Activated CD8-positive, alpha-beta T cell treated with anti-CD3 and anti-CD28 coated beads for 36 hours (primary cell): ENCODE measurements at regions of chr2 and their contacts with region 1.

Region 1: GRCh38 chr2:61764035-61764800 is 89.6 kb downstream of the FAM161A start:
- DNase-seq: peak; percentile 98
- ATAC-seq: peak; percentile 98
- H3K4me3 Mint-ChIP-seq: peak overlapping the region; percentile 95
- H3K27ac Mint-ChIP-seq: peak overlapping the region; percentile 95
- H3K4me1 Mint-ChIP-seq: peaks cover 15% of the 10 kb centered on the region
- H3K27me3 Mint-ChIP-seq: no peaks in the 10 kb centered on the region
- CTCF ChIP-seq: no peak

Region 2: DNA sequence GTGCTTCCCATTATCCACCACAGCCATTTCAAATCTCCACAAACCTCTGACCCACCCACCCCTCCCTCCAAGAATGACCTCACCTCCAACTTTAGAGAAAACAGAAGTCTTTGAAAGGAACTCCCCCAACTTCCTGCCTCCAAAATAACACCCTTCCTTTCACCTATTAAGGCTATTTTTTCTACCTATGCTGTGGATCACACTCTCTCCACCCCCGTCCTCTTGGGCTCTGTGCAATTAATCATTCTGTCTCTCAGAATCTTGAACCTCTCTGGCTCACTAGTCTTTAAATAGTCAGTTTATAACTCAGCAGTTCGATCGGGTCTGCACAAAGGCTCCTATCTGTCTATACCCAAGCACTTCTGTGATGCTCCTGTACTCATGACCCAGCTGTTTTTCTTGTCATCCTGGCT is 188.8 kb before region 1 on chr2:
- CTCF ChIA-PET with region 1: no interaction called
- POLR2A ChIA-PET with region 1: no interaction called
- intact Hi-C with region 1: no loop called
- DNase-seq: peak; percentile 43
- ATAC-seq: peak; percentile 90
- H3K4me3 Mint-ChIP-seq: no peak overlapping the region
- H3K27ac Mint-ChIP-seq: peak overlapping the region; percentile 71
- H3K4me1 Mint-ChIP-seq: peaks cover 11% of the 10 kb centered on the region
- H3K27me3 Mint-ChIP-seq: no peaks in the 10 kb centered on the region
- CTCF ChIP-seq: no peak

Region 3: GRCh38 chr2:61604433-61604832 is 159.8 kb before region 1 on chr2:
- CTCF ChIA-PET with region 1: no interaction called
- POLR2A ChIA-PET with region 1: no interaction called
- intact Hi-C with region 1: no loop called
- DNase-seq: no peak
- ATAC-seq: no peak
- H3K4me3 Mint-ChIP-seq: no peak overlapping the region
- H3K27ac Mint-ChIP-seq: no peak overlapping the region
- H3K4me1 Mint-ChIP-seq: no peaks in the 10 kb centered on the region
- H3K27me3 Mint-ChIP-seq: no peaks in the 10 kb centered on the region
- CTCF ChIP-seq: no peak

Region 4: DNA sequence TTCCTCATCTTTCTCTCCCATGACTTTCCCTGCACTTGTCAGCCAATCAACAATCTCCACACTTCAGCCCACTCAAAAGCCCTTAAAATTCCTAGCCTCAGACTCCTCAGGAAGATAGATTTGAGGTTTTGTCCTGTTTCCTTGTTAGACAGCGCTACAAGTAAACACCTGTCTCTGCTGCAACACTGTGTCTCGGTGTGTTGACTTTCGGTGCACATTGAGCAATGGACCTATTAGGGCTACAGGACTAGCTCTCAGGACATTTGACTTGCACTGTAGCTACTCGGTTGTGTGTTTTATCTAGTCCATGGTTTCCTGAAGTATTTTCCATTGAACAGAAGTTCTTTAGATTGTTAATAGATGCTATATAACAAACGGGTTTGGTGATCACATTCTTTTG is 85.1 kb before region 1 on chr2:
- CTCF ChIA-PET with region 1: no interaction called
- POLR2A ChIA-PET with region 1: no interaction called
- intact Hi-C with region 1: no loop called
- DNase-seq: no peak
- ATAC-seq: no peak
- H3K4me3 Mint-ChIP-seq: no peak overlapping the region
- H3K27ac Mint-ChIP-seq: no peak overlapping the region
- H3K4me1 Mint-ChIP-seq: no peaks in the 10 kb centered on the region
- H3K27me3 Mint-ChIP-seq: no peaks in the 10 kb centered on the region
- CTCF ChIP-seq: no peak

Region 5: DNA sequence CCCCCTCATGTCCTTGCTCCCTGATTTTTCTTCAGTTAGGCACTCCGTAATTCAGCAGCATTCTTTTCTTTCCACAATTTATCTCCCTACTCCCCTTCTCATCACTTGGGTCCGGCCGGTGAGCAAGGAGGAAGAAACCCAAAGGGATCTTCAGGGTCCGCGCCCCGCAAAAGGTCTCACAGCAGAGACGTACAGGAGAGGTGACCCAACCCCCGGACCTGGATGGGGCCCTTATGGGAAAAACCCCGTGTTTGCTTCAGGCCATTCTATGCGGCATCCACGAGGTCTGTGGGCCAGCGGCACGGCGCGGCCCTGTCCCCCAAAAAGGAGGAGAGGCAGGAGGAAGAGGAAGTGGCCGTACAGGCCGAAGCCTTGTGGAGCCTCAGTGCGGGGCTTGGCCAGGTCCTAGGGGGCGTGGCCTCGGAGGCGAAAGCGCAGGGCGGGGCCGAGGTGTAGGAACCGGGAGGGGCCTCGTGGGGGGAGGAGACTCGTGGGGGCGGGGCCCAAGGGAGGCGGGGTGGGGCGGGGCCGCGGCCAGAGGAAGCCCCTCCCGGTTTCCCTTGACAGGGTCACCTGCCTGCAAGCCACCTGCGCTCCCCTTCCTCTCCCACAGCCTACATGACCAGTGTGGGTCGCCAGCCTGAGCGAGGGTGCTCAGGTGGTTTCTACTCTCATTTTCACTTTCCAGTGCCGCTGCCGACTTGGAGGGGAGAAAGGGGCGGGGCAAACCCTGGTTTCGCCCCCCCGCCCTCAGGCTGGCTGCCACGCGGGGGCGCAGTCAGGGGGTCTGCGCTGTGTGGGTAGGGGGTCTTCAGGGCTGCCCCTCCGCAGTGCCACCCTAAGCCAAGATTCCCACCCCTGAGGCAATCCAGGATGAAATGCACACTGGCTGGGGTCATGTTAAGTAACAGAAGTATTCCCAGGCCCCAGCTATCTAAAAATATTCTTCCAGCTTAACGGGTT is 69.6 kb before region 1 on chr2:
- CTCF ChIA-PET with region 1: no interaction called
- POLR2A ChIA-PET with region 1: no interaction called
- intact Hi-C with region 1: loop called (anchors 10 kb)
- DNase-seq: peak; percentile 86
- ATAC-seq: peak; percentile 97
- H3K4me3 Mint-ChIP-seq: peak overlapping the region; percentile 82
- H3K27ac Mint-ChIP-seq: peak overlapping the region; percentile 87
- H3K4me1 Mint-ChIP-seq: peaks cover 13% of the 10 kb centered on the region
- H3K27me3 Mint-ChIP-seq: no peaks in the 10 kb centered on the region
- CTCF ChIP-seq: peak; percentile 46

Region 6: DNA sequence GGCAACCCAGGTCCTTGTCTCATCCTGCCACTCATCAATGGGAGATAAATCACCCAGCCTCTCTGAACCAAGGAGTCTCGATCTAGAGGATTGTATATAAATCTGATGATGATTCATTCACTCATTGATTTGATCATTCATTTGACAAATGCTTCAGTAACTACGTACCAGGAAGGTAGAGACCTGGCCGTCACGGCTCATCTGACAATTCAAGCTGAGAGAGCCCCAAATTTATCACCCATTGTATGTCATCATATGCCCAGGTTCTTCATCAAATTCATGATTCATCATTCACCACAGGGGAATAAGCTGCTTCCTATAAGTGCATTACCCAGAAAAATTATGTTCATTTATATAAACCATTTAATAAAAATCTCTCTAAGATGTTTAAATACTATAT is 27.3 kb before region 1 on chr2:
- CTCF ChIA-PET with region 1: no interaction called
- POLR2A ChIA-PET with region 1: no interaction called
- intact Hi-C with region 1: no loop called
- DNase-seq: no peak
- ATAC-seq: no peak
- H3K4me3 Mint-ChIP-seq: no peak overlapping the region
- H3K27ac Mint-ChIP-seq: no peak overlapping the region
- H3K4me1 Mint-ChIP-seq: no peaks in the 10 kb centered on the region
- H3K27me3 Mint-ChIP-seq: no peaks in the 10 kb centered on the region
- CTCF ChIP-seq: no peak